ENCODE measurements at regions of chr16 and their contacts with region 1.

Region 1: GRCh38 chr16:15760129-15760528 is 96.7 kb downstream of the MYH11 start:
- DNase-seq: no peak
- H3K4me3 ChIP-seq: no peak overlapping the region
- H3K27ac ChIP-seq: no peak overlapping the region
- H3K4me1 ChIP-seq: no peaks in the 10 kb centered on the region
- H3K27me3 ChIP-seq: no peaks in the 10 kb centered on the region

Region 2: GRCh38 chr16:15672514-15673167 is 87.5 kb before region 1 on chr16:
- CTCF ChIA-PET with region 1: no interaction called
- POLR2A ChIA-PET with region 1: no interaction called
- DNase-seq: peak; percentile 96 to 99 (median 99)
- H3K4me3 ChIP-seq: peak overlapping the region in 4 of 7 experiments; percentile 16 to 57 (median 44)
- H3K27ac ChIP-seq: peak overlapping the region; percentile 98 to 99
- H3K4me1 ChIP-seq: peaks cover 5 to 50% (median 33%) of the 10 kb centered on the region in 4 experiments
- H3K27me3 ChIP-seq: no peaks in the 10 kb centered on the region

Region 3: DNA sequence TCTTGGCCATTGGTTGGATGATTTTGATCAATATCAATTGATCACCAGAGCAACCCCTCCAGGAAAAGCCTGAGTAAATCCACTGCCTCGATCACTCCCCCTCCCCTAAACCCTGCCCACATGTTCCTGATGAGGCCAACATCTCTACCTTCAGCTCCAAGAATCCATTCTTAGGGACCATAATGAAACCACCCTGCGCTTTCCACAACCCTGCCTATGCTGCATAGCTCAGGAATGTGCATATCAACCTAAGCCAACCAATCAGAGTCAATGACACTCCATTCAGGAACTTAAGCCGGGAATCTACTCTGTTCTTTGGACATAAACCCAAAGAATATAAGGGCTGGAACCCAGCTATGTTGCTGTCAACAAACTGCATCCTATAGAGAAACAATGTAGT is 10.4 kb after region 1 on chr16:
- CTCF ChIA-PET with region 1: interaction called, 11 read pairs
- POLR2A ChIA-PET with region 1: no interaction called
- DNase-seq: no peak
- H3K4me3 ChIP-seq: no peak overlapping the region
- H3K27ac ChIP-seq: no peak overlapping the region
- H3K4me1 ChIP-seq: peaks cover 0 to 2% (median 0%) of the 10 kb centered on the region in 4 experiments
- H3K27me3 ChIP-seq: no peaks in the 10 kb centered on the region